ENCODE measurements at regions of chr10 and their contacts with region 1.

Region 1: DNA sequence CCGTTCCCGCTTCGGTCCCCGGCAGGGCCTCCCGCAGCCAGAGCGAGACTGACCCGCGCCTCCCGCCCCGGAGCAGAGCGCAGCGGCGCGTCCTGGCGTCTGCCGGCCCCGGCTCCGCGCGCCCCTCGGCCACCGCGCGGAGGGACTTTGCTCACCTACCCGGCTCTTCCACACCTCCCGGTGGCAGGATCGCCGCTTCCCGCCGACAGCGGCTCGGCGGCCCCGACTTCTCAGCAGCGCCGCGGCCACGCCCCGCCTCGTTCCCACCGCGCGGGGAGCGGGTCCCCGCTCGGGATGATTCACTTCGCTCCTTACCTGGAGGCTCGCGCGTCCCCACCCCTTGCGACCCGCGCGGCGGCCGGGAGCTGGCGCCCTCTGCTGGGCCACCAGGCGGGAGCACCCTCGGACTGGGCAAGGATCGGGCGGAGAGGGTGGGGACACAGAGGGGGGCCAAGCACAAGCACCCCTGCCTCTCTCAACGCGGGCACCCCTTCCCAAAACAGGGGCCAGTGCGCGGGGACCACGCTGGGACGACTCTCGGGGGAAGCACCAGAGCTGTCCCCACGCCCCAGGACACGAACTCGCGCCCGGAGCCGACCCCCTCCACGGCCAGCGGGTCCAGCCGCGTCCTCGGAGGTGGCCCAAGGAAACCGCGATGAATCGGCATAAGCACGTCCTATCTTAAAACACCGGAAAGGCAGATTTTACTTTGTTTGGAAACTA is 101.0 kb upstream of the SVIL start:
- DNase-seq: peak; percentile 97

Region 2: GRCh38 chr10:29501692-29502091 is 234.1 kb before region 1 on chr10:
- intact Hi-C with region 1: no loop called
- DNase-seq: no peak

Region 3: GRCh38 chr10:29529146-29529545 is 206.6 kb before region 1 on chr10:
- intact Hi-C with region 1: loop called (anchors 5 kb)
- DNase-seq: no peak

Region 4: DNA sequence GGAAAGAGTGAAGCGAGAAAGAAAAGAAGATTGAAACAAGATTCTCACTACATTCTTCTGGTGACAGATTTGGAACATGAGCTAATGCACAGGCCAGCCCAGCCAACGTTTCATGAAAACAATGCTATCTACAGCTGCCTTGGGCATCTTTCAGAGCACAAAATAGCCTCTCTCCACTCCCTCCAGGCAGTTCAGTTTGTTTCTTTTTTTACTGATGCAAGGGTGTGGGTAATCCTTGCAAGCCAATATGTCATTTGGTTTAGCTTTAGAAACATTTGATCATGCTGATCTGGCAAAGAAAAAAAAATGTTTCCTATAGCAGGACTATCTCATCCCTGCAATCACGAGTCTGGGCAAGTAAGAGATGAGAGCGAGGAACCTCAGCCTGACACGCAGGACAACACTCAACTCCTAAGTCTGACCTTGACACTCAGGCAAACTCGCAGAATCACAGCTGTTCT is 136.9 kb before region 1 on chr10:
- intact Hi-C with region 1: loop called (anchors 5 kb)
- DNase-seq: no peak

Region 5: GRCh38 chr10:29634764-29635625 is 100.8 kb before region 1 on chr10 and contains the start of gene SVIL:
- intact Hi-C with region 1: loop called (anchors 1 kb)
- DNase-seq: peak; percentile 88
- total RNA-seq, gene SVIL: 518 TPM

Region 6: GRCh38 chr10:29691564-29692072 is 44.1 kb before region 1 on chr10:
- intact Hi-C with region 1: loop called (anchors 5 kb)
- DNase-seq: no peak

Region 7: GRCh38 chr10:29784175-29784773 is 48.5 kb after region 1 on chr10:
- intact Hi-C with region 1: loop called (anchors 5 kb)
- DNase-seq: peak; percentile 77

Region 8: DNA sequence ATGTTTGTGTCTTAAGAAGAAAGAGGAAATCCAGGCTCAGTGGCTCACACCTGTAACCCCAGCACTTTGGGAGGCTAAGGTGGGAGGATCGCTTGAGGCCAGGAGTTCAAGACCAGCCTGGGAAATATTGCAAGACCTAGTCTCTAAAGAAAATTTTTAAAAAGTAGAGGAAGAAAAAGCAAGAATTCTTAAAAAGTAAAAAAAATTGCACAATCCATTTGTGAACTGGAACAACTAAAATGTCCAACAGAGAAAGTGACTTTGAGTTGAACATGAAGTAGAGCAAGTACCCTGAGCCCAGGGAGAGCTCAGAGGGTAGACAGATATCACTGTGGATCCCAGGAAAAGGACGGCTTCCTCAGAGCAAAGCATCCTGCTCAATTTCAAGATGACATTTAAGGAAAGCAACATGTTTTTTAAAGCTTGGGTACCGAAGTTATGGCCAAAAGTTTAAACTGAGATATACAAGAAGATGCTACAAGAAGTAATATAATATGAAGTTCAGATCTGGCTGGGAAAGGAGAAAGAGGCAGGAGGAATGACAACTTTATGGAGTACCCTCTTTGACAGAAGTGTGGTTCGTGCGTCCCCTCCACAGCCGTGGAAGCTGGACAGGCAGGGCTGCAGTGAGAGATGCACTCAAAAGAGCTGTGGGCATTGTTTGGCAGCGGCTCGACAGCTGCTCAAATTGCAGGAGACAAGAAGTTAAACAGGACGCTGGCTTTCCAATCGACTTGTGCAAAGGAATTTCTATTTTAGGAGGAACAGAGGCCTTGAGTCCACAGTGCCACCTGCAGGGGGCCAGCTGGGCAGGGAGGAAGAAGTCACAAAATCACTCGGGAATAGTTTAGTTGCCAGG is 122.3 kb after region 1 on chr10:
- intact Hi-C with region 1: loop called (anchors 1 kb)
- DNase-seq: peak; percentile 79

Region 9: DNA sequence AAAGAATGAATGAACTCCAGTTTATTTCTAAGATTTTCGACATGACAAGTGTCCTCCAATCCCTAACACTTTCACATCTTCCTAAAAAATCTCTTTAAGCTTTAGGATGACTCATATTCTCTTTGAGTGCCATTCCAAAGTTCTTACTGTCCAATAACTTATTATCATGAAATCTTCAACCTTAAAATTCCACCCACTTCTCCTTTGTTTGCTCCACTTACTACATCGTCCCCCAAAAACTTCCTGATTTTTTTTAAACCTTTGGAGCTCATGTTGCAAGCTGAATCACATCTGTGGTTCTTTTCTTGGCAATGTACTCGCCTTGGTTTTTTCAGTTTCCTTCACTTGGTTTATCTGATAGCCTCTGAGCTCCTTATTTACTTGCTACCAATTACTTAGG is 362.9 kb after region 1 on chr10:
- intact Hi-C with region 1: no loop called
- DNase-seq: no peak